SK-N-SH (cell line): ENCODE measurements at regions of chr1 and their contacts with region 1.

Region 1: GRCh38 chr1:111507411-111508201 is 4.2 kb upstream of the ADORA3 start:
- DNase-seq: peak; percentile 57
- H3K4me3 ChIP-seq: peak overlapping the region; percentile 24 to 42; a peak in 2 of 4 replicates
- H3K27ac ChIP-seq: peak overlapping the region; percentile 56 to 73; a peak in 3 of 4 replicates
- H3K4me1 ChIP-seq: peaks cover 8 to 9% of the 10 kb centered on the region in 2 experiments; a peak in 2 of 4 replicates
- H3K27me3 ChIP-seq: no peaks in the 10 kb centered on the region; the same call in 1 of the 2 replicates
- CTCF ChIP-seq: no peak
- EP300 ChIP-seq: no peak
- RAD21 ChIP-seq: no peak

Region 2: GRCh38 chr1:111227851-111228747 is 279.5 kb before region 1 on chr1:
- CTCF ChIA-PET with region 1: no interaction called
- POLR2A ChIA-PET with region 1: no interaction called
- DNase-seq: no peak
- H3K4me3 ChIP-seq: 0 out of 4 replicates have a peak overlapping the region, but pooled peaks of 1 of the 2 experiments have one; percentile 12
- H3K27ac ChIP-seq: peak overlapping the region in 1 of 2 experiments; percentile 86; a peak in 2 of 4 replicates
- H3K4me1 ChIP-seq: peaks cover 0 to 27% of the 10 kb centered on the region in 2 experiments; a peak in 2 of 4 replicates
- H3K27me3 ChIP-seq: no peaks in the 10 kb centered on the region
- CTCF ChIP-seq: no peak
- EP300 ChIP-seq: peak in 1 of 2 experiments; percentile 76; a peak in 2 of 4 replicates
- RAD21 ChIP-seq: no peak

Region 3: DNA sequence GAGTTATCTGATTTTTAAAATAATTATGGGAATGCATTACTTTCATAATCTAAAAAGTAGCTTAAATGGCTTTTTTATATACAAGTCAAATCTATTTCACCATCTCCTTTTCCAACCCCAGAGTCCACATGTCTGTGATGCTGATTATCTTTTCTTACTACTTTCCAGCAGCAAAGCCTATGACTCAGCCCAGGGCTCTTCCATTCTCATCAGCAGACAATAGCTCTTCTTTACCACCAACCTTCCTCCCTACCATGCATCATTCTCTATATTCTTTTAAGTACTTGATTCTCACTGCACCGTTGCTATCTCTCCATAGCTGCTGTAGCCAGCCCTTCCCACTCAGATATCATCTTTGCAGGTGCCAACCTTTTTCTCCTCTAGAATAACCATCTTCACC is 141.3 kb before region 1 on chr1:
- CTCF ChIA-PET with region 1: no interaction called
- POLR2A ChIA-PET with region 1: no interaction called
- DNase-seq: no peak
- H3K4me3 ChIP-seq: no peak overlapping the region
- H3K27ac ChIP-seq: 0 out of 4 replicates have a peak overlapping the region, but pooled peaks of 1 of the 2 experiments have one; percentile 14
- H3K4me1 ChIP-seq: peaks cover 0 to 18% of the 10 kb centered on the region in 2 experiments; a peak in 2 of 4 replicates
- H3K27me3 ChIP-seq: no peaks in the 10 kb centered on the region
- CTCF ChIP-seq: no peak
- EP300 ChIP-seq: no peak
- RAD21 ChIP-seq: no peak

Region 4: DNA sequence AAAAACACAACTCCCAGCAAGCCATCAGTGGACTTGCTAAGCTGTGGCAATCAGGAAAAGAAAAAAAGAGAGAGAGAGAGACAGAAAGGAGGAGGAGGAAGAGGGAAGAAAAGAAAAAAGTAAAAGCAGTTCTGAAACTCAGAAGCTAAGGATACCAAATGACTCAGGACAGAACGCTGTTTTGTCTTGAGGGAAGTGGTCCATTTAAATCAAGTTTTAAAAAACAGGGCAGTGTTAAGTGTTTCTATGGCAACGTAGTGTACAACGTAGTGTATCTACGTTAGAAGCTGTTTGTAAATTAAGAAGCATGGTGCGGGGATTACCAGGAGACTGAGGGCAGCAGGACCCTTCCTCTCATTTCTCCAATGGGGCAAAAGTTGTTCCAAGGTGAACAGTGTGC is 10.0 kb before region 1 on chr1:
- CTCF ChIA-PET with region 1: interaction called, 49 read pairs
- POLR2A ChIA-PET with region 1: no interaction called
- DNase-seq: no peak
- H3K4me3 ChIP-seq: no peak overlapping the region
- H3K27ac ChIP-seq: no peak overlapping the region
- H3K4me1 ChIP-seq: no peaks in the 10 kb centered on the region
- H3K27me3 ChIP-seq: no peaks in the 10 kb centered on the region; the same call in 1 of the 2 replicates
- CTCF ChIP-seq: no peak
- EP300 ChIP-seq: no peak
- RAD21 ChIP-seq: no peak

Region 5: DNA sequence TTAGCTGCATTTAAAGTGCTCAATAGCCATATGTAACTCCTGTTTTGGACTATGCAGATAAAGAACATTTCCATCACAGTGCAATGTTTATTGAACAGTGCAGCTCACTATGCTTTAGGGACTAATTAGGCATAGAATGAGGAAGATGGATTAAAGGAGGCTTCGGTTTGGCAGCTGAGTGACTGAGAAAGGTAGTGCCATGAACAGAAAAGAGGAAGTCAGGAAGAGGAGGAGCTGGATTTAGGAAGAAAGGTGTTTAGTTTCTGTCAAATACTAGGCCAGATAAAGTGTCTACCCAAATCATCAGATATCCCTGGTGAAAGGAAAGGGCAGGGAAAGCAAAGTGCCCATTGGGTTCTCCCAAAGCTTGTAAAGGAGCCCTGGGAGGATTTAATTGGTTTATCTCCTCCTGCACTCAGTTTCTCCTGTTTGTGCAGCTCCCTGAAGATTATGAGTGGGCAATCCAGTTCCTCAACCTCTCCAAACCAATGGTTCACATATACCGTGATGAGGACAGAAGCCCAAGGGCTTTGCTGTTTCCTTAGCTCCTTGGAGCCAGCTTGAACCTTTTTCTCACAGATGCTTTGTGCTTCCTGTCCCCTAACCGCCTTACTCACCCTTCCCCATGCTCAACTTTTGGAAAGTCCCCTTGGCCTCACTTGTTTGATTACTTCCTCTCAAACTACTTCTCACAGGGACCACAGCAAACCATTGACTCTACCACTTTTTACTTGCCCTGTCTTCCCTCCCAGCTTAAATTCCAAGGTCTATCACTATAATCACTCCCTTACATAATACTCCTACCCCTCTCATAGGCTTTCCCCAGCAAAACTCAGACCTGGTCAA is 108.5 kb after region 1 on chr1:
- CTCF ChIA-PET with region 1: interaction called, 10 read pairs
- POLR2A ChIA-PET with region 1: no interaction called
- DNase-seq: no peak
- H3K4me3 ChIP-seq: no peak overlapping the region
- H3K27ac ChIP-seq: no peak overlapping the region
- H3K4me1 ChIP-seq: peaks cover 0 to 15% of the 10 kb centered on the region in 2 experiments; a peak in 3 of 4 replicates
- H3K27me3 ChIP-seq: no peaks in the 10 kb centered on the region
- CTCF ChIP-seq: no peak
- EP300 ChIP-seq: no peak
- RAD21 ChIP-seq: no peak

Region 6: GRCh38 chr1:111656086-111657017 is 148.7 kb after region 1 on chr1:
- CTCF ChIA-PET with region 1: interaction called, 13 read pairs
- POLR2A ChIA-PET with region 1: no interaction called
- DNase-seq: peak; percentile 59
- H3K4me3 ChIP-seq: no peak overlapping the region
- H3K27ac ChIP-seq: no peak overlapping the region
- H3K4me1 ChIP-seq: no peaks in the 10 kb centered on the region
- H3K27me3 ChIP-seq: no peaks in the 10 kb centered on the region
- CTCF ChIP-seq: peak; percentile 82
- EP300 ChIP-seq: peak in 1 of 2 experiments; percentile 16; a peak in 1 of 4 replicates
- RAD21 ChIP-seq: peak; percentile 89

Region 7: DNA sequence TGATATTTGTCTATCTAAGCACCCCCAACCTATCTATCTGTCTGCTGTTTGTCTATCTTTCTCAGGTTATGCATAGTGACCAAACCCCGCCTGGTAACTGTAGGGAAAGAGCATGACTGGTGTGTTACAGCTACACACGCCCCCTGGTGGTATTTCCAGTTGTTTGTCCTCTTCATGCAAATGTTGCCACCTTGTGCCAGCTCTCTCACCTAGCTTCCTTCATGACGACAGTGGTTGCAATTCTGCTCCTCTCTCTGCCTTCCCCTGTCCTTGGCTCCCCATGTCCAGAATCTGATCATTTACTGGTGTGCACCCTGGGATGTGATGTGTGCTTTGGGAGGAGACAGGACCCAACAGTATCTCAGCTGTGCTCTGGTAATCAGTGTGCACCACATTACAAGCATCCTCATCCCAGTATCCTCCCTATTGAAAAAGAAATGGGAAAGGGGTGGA is 239.7 kb after region 1 on chr1:
- CTCF ChIA-PET with region 1: interaction called, 36 read pairs
- POLR2A ChIA-PET with region 1: no interaction called
- DNase-seq: peak; percentile 61
- H3K4me3 ChIP-seq: no peak overlapping the region
- H3K27ac ChIP-seq: no peak overlapping the region
- H3K4me1 ChIP-seq: peaks cover 0 to 15% of the 10 kb centered on the region in 2 experiments; a peak in 1 of 4 replicates
- H3K27me3 ChIP-seq: no peaks in the 10 kb centered on the region
- CTCF ChIP-seq: peak; percentile 65
- EP300 ChIP-seq: no peak
- RAD21 ChIP-seq: peak; percentile 65

Region 8: DNA sequence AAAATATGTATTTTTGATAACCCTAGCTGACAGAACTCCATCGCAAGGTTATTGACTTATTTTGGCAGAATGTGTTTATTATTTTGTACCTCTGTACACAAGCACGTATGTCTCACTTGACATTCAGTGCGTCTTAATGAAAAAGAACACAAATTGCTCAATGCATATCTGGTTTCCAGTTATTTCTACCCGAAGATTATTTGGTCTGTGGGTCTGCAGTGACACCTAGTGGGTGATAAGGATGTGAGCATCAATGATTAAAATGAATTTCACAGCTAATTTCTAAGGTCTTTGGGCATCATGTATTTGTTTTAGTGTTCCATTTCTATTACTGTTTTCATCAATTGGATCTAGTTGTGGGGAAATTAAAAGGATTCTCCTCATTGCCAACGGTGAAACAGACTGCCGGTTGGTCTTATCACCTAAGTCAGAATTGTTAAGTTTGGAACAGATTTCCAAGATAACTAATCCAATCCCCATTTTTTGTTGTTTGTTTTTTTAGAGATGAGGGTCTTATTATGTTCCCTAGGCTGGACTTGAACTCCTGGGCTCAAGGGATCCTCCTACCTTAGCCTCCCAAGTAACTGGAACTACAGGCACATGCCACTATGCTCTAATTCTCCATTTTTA is 262.0 kb after region 1 on chr1:
- CTCF ChIA-PET with region 1: interaction called, 64 read pairs
- POLR2A ChIA-PET with region 1: no interaction called
- DNase-seq: peak; percentile 66
- H3K4me3 ChIP-seq: no peak overlapping the region
- H3K27ac ChIP-seq: no peak overlapping the region
- H3K4me1 ChIP-seq: no peaks in the 10 kb centered on the region
- H3K27me3 ChIP-seq: no peaks in the 10 kb centered on the region
- CTCF ChIP-seq: peak; percentile 87
- EP300 ChIP-seq: no peak
- RAD21 ChIP-seq: peak; percentile 87

Region 9: DNA sequence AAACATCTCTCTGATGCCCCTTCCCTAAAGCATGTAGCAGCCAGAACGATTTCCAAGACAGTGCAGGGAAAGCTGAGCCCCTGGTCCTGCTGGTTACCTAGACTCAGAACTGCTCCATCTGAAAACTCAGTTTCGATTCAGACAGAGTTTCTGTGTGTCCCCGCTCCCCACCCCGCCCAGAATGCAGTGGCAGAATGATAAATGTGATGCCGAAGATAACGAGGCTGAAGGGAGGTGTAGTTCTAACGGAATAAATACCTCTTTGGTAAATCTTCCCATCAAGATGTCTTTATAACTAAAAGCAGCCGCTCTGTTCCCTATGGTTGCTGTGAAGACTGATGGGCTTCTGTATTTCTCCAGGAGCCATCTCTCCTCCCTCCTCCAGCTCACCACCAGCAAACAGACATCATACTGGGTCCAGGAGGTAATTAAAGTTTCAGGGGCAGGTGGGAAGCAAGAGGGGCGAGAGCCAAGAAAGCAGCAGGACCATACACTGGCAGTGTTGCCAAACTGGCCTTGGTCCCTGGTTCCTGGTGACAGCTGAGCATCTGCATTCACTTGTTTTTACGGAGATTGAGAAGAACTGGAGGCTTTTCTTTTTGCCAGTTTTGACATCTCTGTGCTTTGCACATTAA is 325.0 kb after region 1 on chr1:
- CTCF ChIA-PET with region 1: no interaction called
- POLR2A ChIA-PET with region 1: no interaction called
- DNase-seq: no peak
- H3K4me3 ChIP-seq: no peak overlapping the region
- H3K27ac ChIP-seq: no peak overlapping the region
- H3K4me1 ChIP-seq: no peaks in the 10 kb centered on the region
- H3K27me3 ChIP-seq: no peaks in the 10 kb centered on the region
- CTCF ChIP-seq: no peak
- EP300 ChIP-seq: no peak
- RAD21 ChIP-seq: no peak